WTC11 (cell line): ENCODE measurements at regions of chr6 and their contacts with region 1.

Region 1: GRCh38 chr6:33579828-33580714 is at the start of gene BAK1:
- DNase-seq: peak; percentile 91
- ATAC-seq: peak; percentile 96
- H3K4me3 Mint-ChIP-seq: peak within 1 kb of the TSS; percentile 77
- H3K27ac Mint-ChIP-seq: no peak within 1 kb of the TSS
- H3K4me1 Mint-ChIP-seq: peaks cover 14% of the 10 kb centered on the region
- H3K27me3 Mint-ChIP-seq: no peaks in the 10 kb centered on the region
- CTCF ChIP-seq: no peak
- total RNA-seq, gene BAK1: 40.5 to 40.9 TPM (median 40.5 TPM) in 3 replicates

Region 2: DNA sequence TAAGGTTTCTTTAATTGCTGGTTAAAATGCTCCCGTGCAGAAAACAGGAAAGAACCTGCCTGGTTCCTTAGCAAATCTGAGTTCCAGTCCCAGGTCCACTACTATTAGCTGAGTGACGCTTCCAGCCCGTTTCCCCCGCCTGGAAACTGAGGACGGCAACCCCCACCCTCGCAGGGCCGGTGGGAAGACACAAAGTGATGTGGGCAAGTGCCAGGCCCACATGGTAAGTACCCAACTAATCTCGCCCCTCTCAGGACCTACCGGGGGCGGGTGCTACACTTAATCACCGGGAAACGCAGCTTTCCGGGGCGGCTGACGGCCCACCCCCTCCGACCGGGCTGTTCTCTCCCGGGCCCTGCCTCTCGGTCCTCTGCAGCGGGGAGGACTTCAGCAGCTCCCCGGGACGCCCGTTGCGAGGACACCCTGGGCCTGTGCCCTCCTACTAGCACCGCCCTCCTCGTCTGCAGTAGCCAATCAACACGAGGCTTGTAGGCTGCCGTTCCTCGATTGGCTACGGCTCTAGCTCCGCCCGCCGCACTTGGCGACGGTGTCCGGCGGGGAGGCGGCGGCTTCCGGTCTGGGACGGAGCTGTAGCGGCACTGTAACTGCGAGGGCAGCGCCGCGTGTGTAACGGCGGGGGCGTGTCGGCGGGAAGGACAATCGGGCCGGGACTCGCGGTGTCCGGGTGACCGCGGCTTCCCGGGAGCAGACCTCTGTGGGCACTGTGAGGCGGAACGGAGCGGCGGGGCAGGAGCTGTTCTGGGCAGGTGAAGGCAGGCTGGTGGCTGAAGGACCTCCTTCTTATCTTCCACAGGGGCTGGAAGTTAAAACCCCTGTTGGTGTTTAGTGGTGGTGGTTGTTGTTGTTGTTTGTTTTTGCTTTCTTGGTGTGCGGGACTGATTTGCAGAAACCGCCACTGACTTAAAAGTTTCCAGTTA is 125.8 kb before region 1 on chr6 and contains the start of gene ZBTB9:
- CTCF ChIA-PET with region 1: interaction called, 14 read pairs
- POLR2A ChIA-PET with region 1: interaction called, 3 read pairs
- DNase-seq: peak; percentile 93
- ATAC-seq: peak; percentile 97
- H3K4me3 Mint-ChIP-seq: peak within 1 kb of the TSS; percentile 92
- H3K27ac Mint-ChIP-seq: peak within 1 kb of the TSS; percentile 77
- H3K4me1 Mint-ChIP-seq: peaks cover 17% of the 10 kb centered on the region
- H3K27me3 Mint-ChIP-seq: peaks cover 4% of the 10 kb centered on the region
- CTCF ChIP-seq: no peak
- total RNA-seq, gene ZBTB9: 19.4 to 21.2 TPM (median 20.8 TPM) in 3 replicates

Region 3: DNA sequence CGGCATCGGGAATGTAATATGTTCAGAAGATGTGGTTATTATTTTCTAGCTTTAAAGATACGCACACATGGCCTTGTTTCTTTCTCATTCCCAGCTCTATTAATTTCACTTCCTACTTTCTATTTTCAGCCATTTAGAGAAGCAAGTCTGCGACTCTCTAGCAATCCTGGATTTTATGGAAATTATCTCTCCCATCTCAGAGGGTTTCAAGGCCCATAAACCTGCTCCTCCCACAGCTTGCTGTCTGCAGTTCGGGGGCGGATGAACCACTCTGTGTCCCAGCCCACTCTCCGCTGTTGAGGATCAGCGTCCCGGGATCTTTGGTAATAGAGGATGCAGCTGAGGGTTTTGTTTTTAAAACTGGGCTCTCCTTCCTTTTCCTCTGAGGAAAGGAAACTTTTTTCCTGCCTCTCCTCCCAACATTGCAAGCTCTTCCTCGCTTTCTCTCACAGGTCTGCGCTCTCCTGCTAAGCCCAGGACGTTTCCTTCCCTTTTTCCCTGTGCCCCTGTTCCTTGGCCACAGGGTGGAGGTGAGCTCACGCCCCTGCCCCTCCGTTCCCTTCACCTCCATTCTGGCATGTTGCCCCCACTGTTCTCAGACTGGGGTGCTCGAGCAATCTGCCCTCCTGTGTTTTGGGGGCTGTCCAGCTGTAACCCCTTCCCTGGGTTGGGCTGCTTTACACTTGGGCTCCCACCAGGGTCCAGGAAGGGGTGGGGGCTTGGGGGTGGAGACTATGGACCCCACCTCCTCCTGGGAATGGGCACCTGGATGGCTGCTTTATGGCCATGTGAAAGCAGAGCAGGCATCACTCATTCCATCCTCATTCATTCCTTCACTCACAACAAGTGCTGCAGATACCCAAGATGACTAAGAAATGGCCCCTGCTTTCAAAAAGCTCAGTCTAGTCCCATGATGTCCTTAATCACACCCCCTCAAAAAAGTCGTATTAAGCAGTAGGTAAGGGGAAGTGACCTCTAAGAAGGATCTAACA is 70.8 kb before region 1 on chr6:
- CTCF ChIA-PET with region 1: interaction called, 15 read pairs
- POLR2A ChIA-PET with region 1: no interaction called
- DNase-seq: peak; percentile 28
- ATAC-seq: peak; percentile 80
- H3K4me3 Mint-ChIP-seq: peak overlapping the region; percentile 52
- H3K27ac Mint-ChIP-seq: peak overlapping the region; percentile 64
- H3K4me1 Mint-ChIP-seq: peaks cover 25% of the 10 kb centered on the region
- H3K27me3 Mint-ChIP-seq: peaks cover 13% of the 10 kb centered on the region
- CTCF ChIP-seq: no peak

Region 4: DNA sequence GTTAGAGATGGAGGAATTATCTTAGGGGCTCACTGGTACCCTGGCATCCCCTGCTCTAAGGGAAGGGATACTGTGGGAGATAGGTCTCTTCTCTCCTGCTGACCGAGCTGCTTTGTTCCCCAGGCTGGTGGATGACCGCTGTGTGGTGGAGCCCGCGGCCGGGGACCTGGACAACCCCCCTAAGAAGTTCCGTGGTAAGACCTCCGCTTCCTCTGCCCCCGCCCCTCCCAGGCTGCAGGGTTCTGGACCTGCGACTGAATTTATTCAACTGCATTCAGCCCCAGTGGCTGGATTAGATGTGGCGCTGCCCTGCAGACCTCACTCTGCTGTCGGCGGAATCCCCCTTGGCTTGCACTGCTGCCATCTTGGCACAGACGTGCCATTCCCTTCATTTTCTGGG is 60.3 kb after region 1 on chr6:
- CTCF ChIA-PET with region 1: no interaction called
- POLR2A ChIA-PET with region 1: no interaction called
- DNase-seq: no peak
- ATAC-seq: no peak
- H3K4me3 Mint-ChIP-seq: no peak overlapping the region
- H3K27ac Mint-ChIP-seq: no peak overlapping the region
- H3K4me1 Mint-ChIP-seq: peaks cover 24% of the 10 kb centered on the region
- H3K27me3 Mint-ChIP-seq: no peaks in the 10 kb centered on the region
- CTCF ChIP-seq: no peak

Region 5: DNA sequence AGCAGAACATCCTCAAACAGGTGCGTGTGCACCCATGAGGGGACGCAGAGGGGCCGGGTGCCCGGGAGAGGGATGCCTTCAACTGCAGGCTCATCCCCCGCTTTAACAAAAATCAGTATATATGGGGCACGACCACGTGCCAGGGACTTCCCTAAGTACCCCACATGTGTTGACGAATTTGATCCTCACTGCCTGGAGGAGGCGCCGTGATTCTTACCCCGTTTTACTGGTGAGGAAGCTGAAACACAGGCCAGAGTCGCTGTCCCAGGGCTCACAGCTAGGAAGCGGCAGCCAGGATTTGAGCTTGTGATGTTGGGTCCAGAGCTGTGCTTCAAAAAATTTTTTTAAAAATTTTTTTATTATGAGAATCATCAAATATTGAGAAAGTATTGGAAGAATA is 85.9 kb after region 1 on chr6:
- CTCF ChIA-PET with region 1: interaction called, 11 read pairs
- POLR2A ChIA-PET with region 1: no interaction called
- DNase-seq: no peak
- ATAC-seq: peak; percentile 30; the same call in 1 of the 2 replicates
- H3K4me3 Mint-ChIP-seq: no peak overlapping the region
- H3K27ac Mint-ChIP-seq: no peak overlapping the region
- H3K4me1 Mint-ChIP-seq: no peaks in the 10 kb centered on the region
- H3K27me3 Mint-ChIP-seq: no peaks in the 10 kb centered on the region
- CTCF ChIP-seq: no peak